Thyroid gland (tissue), 4 donors: ENCODE measurements at regions of chr20 and their contacts with region 1.

Region 1: GRCh38 chr20:6636209-6637159 is 131.0 kb upstream of the BMP2 start:
- DNase-seq: peak; percentile 35 to 50
- H3K4me3 ChIP-seq: no peak overlapping the region
- H3K27ac ChIP-seq: peak overlapping the region in 2 of 3 donors; percentile 11 to 31
- H3K4me1 ChIP-seq: peaks cover 0 to 13% of the 10 kb centered on the region in 2 donors
- H3K27me3 ChIP-seq: no peaks in the 10 kb centered on the region
- CTCF ChIP-seq: peak in 5 of 6 experiments; percentile 33 to 89 (median 75)
- POLR2A ChIP-seq: no peak

Region 2: GRCh38 chr20:6732001-6732447 is 95.5 kb after region 1 on chr20:
- intact Hi-C with region 1: no loop called
- DNase-seq: peak; percentile 21 to 35
- H3K4me3 ChIP-seq: no peak overlapping the region
- H3K27ac ChIP-seq: no peak overlapping the region
- H3K4me1 ChIP-seq: peaks cover 13 to 18% of the 10 kb centered on the region in 2 donors
- H3K27me3 ChIP-seq: no peaks in the 10 kb centered on the region
- CTCF ChIP-seq: no peak
- POLR2A ChIP-seq: no peak

Region 3: GRCh38 chr20:6819605-6820004 is 183.1 kb after region 1 on chr20:
- intact Hi-C with region 1: loop called (anchors 5 kb)
- DNase-seq: peak; percentile 31 to 46
- H3K4me3 ChIP-seq: no peak overlapping the region
- H3K27ac ChIP-seq: no peak overlapping the region
- H3K4me1 ChIP-seq: no peaks in the 10 kb centered on the region
- H3K27me3 ChIP-seq: no peaks in the 10 kb centered on the region
- CTCF ChIP-seq: peak in 5 of 6 experiments; percentile 12 to 77 (median 59)
- POLR2A ChIP-seq: no peak